Tibial artery (tissue), 4 donors: ENCODE measurements at regions of chr7 and their contacts with region 1.

Region 1: GRCh38 chr7:16695621-16696237 is 49.7 kb downstream of the BZW2 start:
- DNase-seq: no peak
- H3K4me3 ChIP-seq: no peak overlapping the region
- H3K27ac ChIP-seq: peak overlapping the region in 1 of 2 donors; percentile 35
- H3K4me1 ChIP-seq: peaks cover 0 to 46% (median 6%) of the 10 kb centered on the region in 4 donors
- H3K27me3 ChIP-seq: no peaks in the 10 kb centered on the region
- CTCF ChIP-seq: peak; percentile 43 to 48

Region 2: GRCh38 chr7:16916111-16916682 is 220.5 kb after region 1 on chr7:
- intact Hi-C with region 1: loop called (anchors 2 kb)
- DNase-seq: no peak
- H3K4me3 ChIP-seq: no peak overlapping the region
- H3K27ac ChIP-seq: no peak overlapping the region
- H3K4me1 ChIP-seq: no peaks in the 10 kb centered on the region
- H3K27me3 ChIP-seq: no peaks in the 10 kb centered on the region
- CTCF ChIP-seq: no peak

Region 3: GRCh38 chr7:17234398-17235031 is 538.8 kb after region 1 on chr7:
- intact Hi-C with region 1: no loop called
- DNase-seq: peak in 1 of 2 donors; percentile 44
- H3K4me3 ChIP-seq: no peak overlapping the region
- H3K27ac ChIP-seq: peak overlapping the region; percentile 52 to 64
- H3K4me1 ChIP-seq: peaks cover 0 to 45% (median 8%) of the 10 kb centered on the region in 4 donors
- H3K27me3 ChIP-seq: no peaks in the 10 kb centered on the region
- CTCF ChIP-seq: peak in 1 of 2 experiments; percentile 17